Activated T-helper 1 cell treated with anti-CD3 and anti-CD28 coated beads, Interleukin-12 subunit alpha, Interleukin-12 subunit beta, Interleukin-2, Interleukin-4 antibody, amounts not matched to agents 30 ng/mL and 10 ng/mL and 1 ng/mL, durations not matched to agents 14 hours and 24 hours and 36 hours (primary cell): ENCODE measurements at regions of chr15 and their contacts with region 1.

Region 1: DNA sequence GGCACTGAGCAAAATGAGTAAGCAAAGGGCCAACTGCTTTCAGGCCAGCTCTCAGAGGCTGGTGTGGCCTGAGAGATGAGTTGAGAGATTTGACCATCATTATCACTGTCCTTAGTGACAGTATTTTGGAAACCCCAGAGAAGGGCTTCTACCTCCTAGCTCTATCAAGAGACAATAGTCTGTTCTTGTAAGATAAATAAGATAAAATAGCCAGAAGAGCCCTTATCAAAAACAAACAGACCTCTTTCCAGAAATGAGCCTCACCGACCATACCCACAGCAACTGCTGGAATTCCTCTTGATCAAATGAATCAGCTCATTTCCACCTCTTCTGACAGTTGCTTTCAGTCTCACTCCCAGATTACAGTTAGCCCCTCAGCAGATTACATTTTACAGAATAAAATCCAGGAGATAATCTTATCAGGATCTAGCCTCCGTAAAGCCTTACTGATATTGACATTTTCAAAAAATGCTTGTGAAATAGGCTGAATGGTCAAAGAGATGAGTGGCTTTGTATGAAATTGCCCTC is 4.5 kb downstream of the HDC start:
- DNase-seq: no peak
- H3K4me3 Mint-ChIP-seq: peak overlapping the region; percentile 66
- H3K27ac Mint-ChIP-seq: peak overlapping the region; percentile 98
- H3K4me1 Mint-ChIP-seq: peaks cover 79% of the 10 kb centered on the region
- H3K27me3 Mint-ChIP-seq: no peaks in the 10 kb centered on the region

Region 2: GRCh38 chr15:48925714-48926223 is 1335.3 kb before region 1 on chr15:
- intact Hi-C with region 1: loop called (anchors 2 kb)
- DNase-seq: no peak
- H3K4me3 Mint-ChIP-seq: peak overlapping the region; percentile 31
- H3K27ac Mint-ChIP-seq: peak overlapping the region; percentile 96
- H3K4me1 Mint-ChIP-seq: peaks cover 74% of the 10 kb centered on the region
- H3K27me3 Mint-ChIP-seq: no peaks in the 10 kb centered on the region

Region 3: GRCh38 chr15:49190586-49190985 is 1070.4 kb before region 1 on chr15:
- intact Hi-C with region 1: no loop called
- DNase-seq: no peak
- H3K4me3 Mint-ChIP-seq: no peak overlapping the region
- H3K27ac Mint-ChIP-seq: no peak overlapping the region
- H3K4me1 Mint-ChIP-seq: peaks cover 17% of the 10 kb centered on the region
- H3K27me3 Mint-ChIP-seq: no peaks in the 10 kb centered on the region

Region 4: GRCh38 chr15:50066192-50066591 is 194.8 kb before region 1 on chr15:
- intact Hi-C with region 1: loop called (anchors 2 kb)
- DNase-seq: peak; percentile 44
- H3K4me3 Mint-ChIP-seq: peak overlapping the region; percentile 45
- H3K27ac Mint-ChIP-seq: peak overlapping the region; percentile 92
- H3K4me1 Mint-ChIP-seq: peaks cover 62% of the 10 kb centered on the region
- H3K27me3 Mint-ChIP-seq: no peaks in the 10 kb centered on the region

Region 5: DNA sequence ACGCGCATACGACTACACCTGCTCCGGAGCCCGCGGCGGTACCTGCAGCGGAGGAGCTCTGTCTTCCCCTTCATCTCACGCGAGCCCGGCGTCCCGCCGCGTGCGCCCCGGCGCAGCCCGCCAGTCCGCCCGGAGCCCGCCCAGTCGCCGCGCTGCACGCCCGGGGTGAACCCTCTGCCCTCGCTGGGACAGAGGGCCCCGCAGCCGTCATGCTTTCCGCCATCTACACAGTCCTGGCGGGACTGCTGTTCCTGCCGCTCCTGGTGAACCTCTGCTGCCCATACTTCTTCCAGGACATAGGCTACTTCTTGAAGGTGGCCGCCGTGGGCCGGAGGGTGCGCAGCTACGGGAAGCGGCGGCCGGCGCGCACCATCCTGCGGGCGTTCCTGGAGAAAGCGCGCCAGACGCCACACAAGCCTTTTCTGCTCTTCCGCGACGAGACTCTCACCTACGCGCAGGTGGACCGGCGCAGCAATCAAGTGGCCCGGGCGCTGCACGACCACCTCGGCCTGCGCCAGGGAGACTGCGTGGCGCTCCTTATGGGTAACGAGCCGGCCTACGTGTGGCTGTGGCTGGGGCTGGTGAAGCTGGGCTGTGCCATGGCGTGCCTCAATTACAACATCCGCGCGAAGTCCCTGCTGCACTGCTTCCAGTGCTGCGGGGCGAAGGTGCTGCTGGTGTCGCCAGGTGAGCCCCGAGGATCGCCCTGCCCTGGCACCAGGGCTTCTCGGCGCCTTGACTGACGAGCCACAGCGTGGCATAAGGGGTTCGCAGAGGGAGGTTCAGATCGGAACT is 78.6 kb before region 1 on chr15:
- intact Hi-C with region 1: loop called (anchors 1 kb)
- DNase-seq: peak; percentile 53
- H3K4me3 Mint-ChIP-seq: peak overlapping the region; percentile 96
- H3K27ac Mint-ChIP-seq: peak overlapping the region; percentile 88
- H3K4me1 Mint-ChIP-seq: peaks cover 60% of the 10 kb centered on the region
- H3K27me3 Mint-ChIP-seq: no peaks in the 10 kb centered on the region

Region 6: DNA sequence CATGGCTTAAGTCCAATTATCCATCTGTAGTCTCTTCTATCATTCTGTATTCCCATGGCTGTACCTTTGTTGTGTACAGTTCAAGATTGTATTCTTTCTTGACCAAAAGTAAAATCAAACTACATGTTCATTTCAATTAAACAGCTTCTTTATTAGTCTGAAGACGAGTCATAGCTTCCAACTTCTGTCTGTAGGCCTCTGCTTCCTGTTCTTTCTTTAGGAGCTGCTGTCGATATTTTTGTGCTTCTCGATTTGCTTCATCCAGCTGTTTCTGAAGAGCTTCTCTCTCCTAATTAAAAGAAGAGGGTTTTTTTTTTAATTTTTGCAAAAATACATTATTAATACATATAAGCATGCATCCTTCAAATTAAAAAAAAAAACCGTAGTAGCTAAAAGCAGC is 17.5 kb after region 1 on chr15:
- intact Hi-C with region 1: loop called (anchors 1 kb)
- DNase-seq: no peak
- H3K4me3 Mint-ChIP-seq: no peak overlapping the region
- H3K27ac Mint-ChIP-seq: peak overlapping the region; percentile 34
- H3K4me1 Mint-ChIP-seq: peaks cover 22% of the 10 kb centered on the region
- H3K27me3 Mint-ChIP-seq: no peaks in the 10 kb centered on the region

Region 7: DNA sequence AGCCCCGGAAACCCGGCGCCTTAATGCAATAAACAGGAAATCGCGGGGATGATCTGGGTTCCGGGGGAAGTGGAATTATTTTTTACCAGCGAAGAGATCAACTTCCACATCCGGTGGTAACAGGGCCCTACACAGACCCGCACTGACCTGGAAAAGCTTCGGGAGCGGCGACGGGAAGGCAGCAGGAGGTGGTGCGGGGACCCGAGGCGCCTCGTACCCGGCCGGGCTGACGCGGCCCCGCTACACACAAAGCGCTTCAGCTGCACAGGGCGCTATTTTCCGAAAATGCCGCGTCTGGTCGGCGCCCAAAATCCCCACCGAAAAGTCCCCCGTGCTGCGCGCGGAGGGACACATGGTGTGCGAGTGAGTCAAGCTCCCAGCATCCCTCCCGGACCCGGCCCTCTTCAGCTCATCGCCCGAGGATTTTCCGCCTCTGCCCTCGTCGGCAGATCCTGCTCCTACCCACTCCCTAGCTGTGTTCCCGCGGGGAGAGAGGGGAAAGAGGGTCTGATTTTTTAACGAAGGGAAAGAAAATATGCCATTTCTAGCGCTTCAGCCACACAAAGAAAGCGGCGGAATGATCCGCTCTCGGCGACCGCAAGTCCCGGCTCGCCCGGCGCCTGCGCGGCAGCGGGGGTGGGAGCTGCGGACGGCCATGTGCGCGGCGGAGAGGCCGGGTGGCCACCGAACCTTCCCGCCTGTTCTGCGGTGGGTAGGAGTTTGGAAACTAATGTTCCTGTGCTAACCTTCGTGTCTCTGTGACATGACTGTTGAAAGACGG is 94.0 kb after region 1 on chr15 and contains the start of gene GABPB1:
- intact Hi-C with region 1: loop called (anchors 1 kb)
- DNase-seq: peak; percentile 87
- H3K4me3 Mint-ChIP-seq: peak within 1 kb of the TSS; percentile 100
- H3K27ac Mint-ChIP-seq: peak within 1 kb of the TSS; percentile 100
- H3K4me1 Mint-ChIP-seq: peaks cover 48% of the 10 kb centered on the region
- H3K27me3 Mint-ChIP-seq: no peaks in the 10 kb centered on the region
- total RNA-seq, gene GABPB1: 80.7 and 81.0 TPM in 2 replicates

Region 8: GRCh38 chr15:50506121-50506520 is 245.1 kb after region 1 on chr15:
- intact Hi-C with region 1: no loop called
- DNase-seq: no peak
- H3K4me3 Mint-ChIP-seq: no peak overlapping the region
- H3K27ac Mint-ChIP-seq: no peak overlapping the region
- H3K4me1 Mint-ChIP-seq: peaks cover 11% of the 10 kb centered on the region
- H3K27me3 Mint-ChIP-seq: no peaks in the 10 kb centered on the region

Region 9: DNA sequence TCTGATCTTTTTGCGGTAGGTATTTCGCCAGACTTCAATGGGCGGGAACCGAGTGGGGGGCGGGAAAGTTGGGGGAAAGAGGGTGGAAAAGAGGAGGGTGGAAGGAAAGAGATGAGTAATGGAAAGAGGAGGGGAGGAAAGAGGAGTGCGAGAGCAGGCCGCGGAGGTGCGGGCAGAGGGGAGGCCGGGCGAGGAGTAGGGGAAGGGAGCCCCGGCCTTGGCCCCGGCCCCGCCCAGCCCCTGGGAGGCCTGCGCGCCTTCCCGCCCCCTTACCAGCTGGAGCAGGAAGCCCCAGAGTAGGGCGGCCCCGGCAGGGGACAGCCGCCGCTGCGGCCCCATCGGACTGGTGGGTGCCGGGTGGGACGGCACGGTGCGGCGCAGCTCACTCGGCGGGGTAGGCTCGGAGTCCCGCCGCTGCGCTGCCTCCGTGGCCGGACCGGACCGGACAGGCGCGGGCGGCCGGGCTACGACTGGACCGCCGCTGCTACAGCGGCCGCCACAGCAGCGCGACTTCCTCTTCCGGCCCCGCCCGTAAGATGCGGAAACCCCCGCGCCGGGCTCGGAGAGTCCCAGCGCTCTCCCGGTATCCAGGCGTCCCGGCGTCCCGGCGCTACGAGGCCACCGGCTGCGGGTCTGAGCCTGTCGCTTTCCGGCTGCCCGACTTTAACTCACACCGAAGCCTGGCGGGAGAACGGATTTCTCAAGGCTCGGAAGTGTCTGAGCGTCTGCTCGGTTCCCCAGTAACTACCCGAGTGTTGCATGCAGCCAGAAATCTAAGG is 504.4 kb after region 1 on chr15 and contains the start of gene SPPL2A:
- intact Hi-C with region 1: loop called (anchors 1 kb)
- DNase-seq: peak; percentile 77
- H3K4me3 Mint-ChIP-seq: peak within 1 kb of the TSS; percentile 96
- H3K27ac Mint-ChIP-seq: peak within 1 kb of the TSS; percentile 97
- H3K4me1 Mint-ChIP-seq: peaks cover 69% of the 10 kb centered on the region
- H3K27me3 Mint-ChIP-seq: no peaks in the 10 kb centered on the region
- total RNA-seq, gene SPPL2A: 100 and 103 TPM in 2 replicates